ENCODE measurements at regions of chr12 and their contacts with region 1.

Region 1: GRCh38 chr12:91316907-91317269 is 134.3 kb upstream of the DCN start:
- DNase-seq: no peak

Region 2: GRCh38 chr12:91274916-91275315 is 42.0 kb before region 1 on chr12:
- intact Hi-C with region 1: loop called (anchors 5 kb)
- DNase-seq: no peak

Region 3: DNA sequence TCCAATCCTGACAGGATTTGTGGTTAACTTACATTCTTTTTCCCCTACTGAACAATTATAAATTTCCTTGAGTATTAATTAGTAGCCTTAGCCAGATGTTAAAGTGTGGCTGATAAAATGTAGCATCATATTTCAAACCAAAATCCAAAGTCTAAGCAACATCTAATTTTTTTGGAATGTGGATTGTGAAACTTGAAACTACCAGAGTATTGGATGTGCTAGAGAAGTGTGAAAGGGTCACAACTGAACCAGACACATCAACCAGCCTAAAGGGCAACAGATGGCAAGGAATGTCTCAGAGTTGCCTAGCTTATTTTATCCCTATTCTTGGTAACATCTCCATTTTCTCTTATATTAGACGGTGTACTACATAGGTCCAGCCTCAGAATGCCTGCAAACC is 18.8 kb after region 1 on chr12:
- intact Hi-C with region 1: no loop called
- DNase-seq: no peak

Region 4: DNA sequence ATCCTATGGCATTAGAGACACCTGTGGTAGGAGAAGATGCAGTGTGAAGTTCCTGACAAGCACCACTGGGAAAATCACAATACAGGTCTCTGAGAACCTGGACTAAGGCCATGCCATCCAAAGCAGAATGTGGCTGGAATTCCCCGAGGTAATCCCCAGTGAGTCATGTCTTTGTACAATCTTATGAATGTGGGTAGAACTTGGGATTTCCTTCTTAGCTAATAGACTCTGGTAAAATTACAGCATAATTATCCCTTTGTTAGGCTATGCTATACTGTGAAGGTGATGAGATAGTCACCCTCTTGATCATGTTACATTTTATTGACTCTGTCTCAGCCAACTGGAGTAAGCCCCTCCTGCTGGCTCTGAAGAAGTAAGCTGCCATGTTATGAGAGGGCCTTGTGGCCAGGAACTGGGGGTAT is 90.0 kb after region 1 on chr12:
- intact Hi-C with region 1: no loop called
- DNase-seq: no peak